Posterior cingulate gyrus (tissue), 11 donors: ENCODE measurements at regions of chr9 and their contacts with region 1.

Region 1: GRCh38 chr9:112939418-112939817 is 48.7 kb upstream of the SLC46A2 start:
- DNase-seq: no peak

Region 2: GRCh38 chr9:112831281-112831851 is 108.1 kb before region 1 on chr9:
- intact Hi-C with region 1: no loop called
- DNase-seq: peak in 1 of 10 donors; percentile 37

Region 3: GRCh38 chr9:113095561-113095960 is 156.1 kb after region 1 on chr9:
- intact Hi-C with region 1: loop called (anchors 10 kb)
- DNase-seq: no peak